ENCODE measurements at regions of chr12 and their contacts with region 1.

Region 1: GRCh38 chr12:29762637-29763300 is 21.0 kb downstream of the TMTC1 start:
- DNase-seq: peak; percentile 77 to 89
- ATAC-seq: peak; percentile 100
- H3K4me3 ChIP-seq: no peak overlapping the region
- H3K27ac ChIP-seq: peak overlapping the region; percentile 49 to 67 (median 62)
- H3K4me1 ChIP-seq: peaks cover 23 to 30% of the 10 kb centered on the region in 2 donors
- H3K27me3 ChIP-seq: no peaks in the 10 kb centered on the region
- CTCF ChIP-seq: no peak
- POLR2A ChIP-seq: no peak

Region 2: GRCh38 chr12:29682088-29682487 is 80.7 kb before region 1 on chr12:
- in situ Hi-C with region 1: no loop called
- intact Hi-C with region 1: no loop called
- DNase-seq: no peak
- ATAC-seq: no peak
- H3K4me3 ChIP-seq: no peak overlapping the region
- H3K27ac ChIP-seq: no peak overlapping the region
- H3K4me1 ChIP-seq: peaks cover 7 to 11% of the 10 kb centered on the region in 2 donors
- H3K27me3 ChIP-seq: no peaks in the 10 kb centered on the region
- CTCF ChIP-seq: no peak
- POLR2A ChIP-seq: no peak

Region 3: GRCh38 chr12:29713744-29714143 is 49.0 kb before region 1 on chr12:
- in situ Hi-C with region 1: no loop called
- intact Hi-C with region 1: loop called (anchors 2 kb)
- DNase-seq: no peak
- ATAC-seq: peak; percentile 12 to 25
- H3K4me3 ChIP-seq: no peak overlapping the region
- H3K27ac ChIP-seq: peak overlapping the region; percentile 70 to 79 (median 78)
- H3K4me1 ChIP-seq: peaks cover 43 to 49% of the 10 kb centered on the region in 2 donors
- H3K27me3 ChIP-seq: no peaks in the 10 kb centered on the region
- CTCF ChIP-seq: no peak
- POLR2A ChIP-seq: no peak

Region 4: GRCh38 chr12:29743801-29744200 is 19.0 kb before region 1 on chr12:
- in situ Hi-C with region 1: no loop called
- intact Hi-C with region 1: loop called (anchors 1 kb)
- DNase-seq: peak; percentile 41 to 71
- ATAC-seq: peak; percentile 84 to 85
- H3K4me3 ChIP-seq: no peak overlapping the region
- H3K27ac ChIP-seq: peak overlapping the region; percentile 75 to 93 (median 82)
- H3K4me1 ChIP-seq: peaks cover 52 to 59% of the 10 kb centered on the region in 2 donors
- H3K27me3 ChIP-seq: no peaks in the 10 kb centered on the region
- CTCF ChIP-seq: no peak
- POLR2A ChIP-seq: peak; percentile 35 to 50